ENCODE measurements at regions of chr6 and their contacts with region 1.

Region 1: GRCh38 chr6:80004173-80005072 is at the start of gene TTK:
- DNase-seq: peak; percentile 94
- ATAC-seq: peak; percentile 100
- H3K4me3 ChIP-seq: peak within 1 kb of the TSS; percentile 26 to 93 (median 84)
- H3K4me3 Mint-ChIP-seq: peak within 1 kb of the TSS; percentile 92
- H3K27ac ChIP-seq: peak within 1 kb of the TSS; percentile 39 to 57
- H3K27ac Mint-ChIP-seq: peak within 1 kb of the TSS; percentile 70
- H3K4me1 ChIP-seq: peaks cover 12 to 13% of the 10 kb centered on the region in 2 donors
- H3K4me1 Mint-ChIP-seq: peaks cover 21% of the 10 kb centered on the region
- H3K27me3 ChIP-seq: no peaks in the 10 kb centered on the region
- H3K27me3 Mint-ChIP-seq: no peaks in the 10 kb centered on the region
- CTCF ChIP-seq: no peak
- total RNA-seq, gene TTK: 0.68 and 0.84 TPM in 2 replicates

Region 2: DNA sequence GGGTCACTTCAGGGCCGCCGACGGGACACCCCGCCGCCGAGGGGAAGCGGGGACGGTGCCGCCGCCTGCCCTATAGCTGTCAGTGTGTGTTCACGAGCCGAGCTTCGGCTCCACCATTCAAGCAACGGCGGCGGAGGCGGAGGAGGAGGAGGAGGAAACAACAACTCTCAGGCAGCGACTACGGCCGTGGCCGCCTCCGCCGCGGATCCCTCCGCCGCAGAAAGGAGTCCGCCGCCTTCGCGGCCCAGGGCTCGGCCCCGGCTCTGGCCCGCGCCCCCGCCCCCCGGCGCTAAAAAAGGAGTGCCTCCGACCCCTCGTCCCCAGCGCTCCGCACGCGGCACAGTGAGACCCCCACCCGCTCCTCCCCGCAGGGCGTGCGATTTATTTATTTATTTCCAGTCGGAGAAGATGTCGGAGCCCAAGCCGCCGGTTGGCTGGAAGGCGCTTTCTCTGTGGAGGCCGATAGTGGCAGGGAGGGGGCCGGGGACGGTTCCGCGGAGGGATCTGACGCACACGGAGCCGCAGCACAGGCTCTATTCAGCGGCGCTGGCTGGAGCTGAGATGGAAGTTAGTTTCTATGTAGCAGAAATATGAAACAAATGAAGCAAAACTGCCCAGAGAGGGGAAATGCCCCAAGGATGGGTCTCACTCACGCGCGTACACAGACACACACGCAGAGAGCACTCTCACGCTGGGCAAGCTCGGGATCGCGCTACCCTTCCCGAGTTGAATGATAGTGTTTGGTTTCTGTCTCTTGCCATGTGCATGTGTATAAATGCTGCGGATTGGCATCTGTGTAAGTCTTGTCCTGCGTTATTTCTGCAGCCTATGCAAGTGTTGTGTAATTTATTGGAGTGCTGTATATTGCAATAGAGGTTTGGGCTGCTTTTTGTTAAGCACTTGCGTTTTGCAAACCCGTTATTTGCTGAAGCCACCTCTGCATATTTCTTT is 926.1 kb before region 1 on chr6 and contains the start of gene PHIP:
- CTCF ChIA-PET with region 1: no interaction called
- POLR2A ChIA-PET with region 1: no interaction called
- intact Hi-C with region 1: loop called (anchors 2 kb)
- DNase-seq: peak; percentile 98
- ATAC-seq: peak; percentile 76
- H3K4me3 ChIP-seq: peak within 1 kb of the TSS; percentile 82 to 99 (median 86)
- H3K4me3 Mint-ChIP-seq: peak within 1 kb of the TSS; percentile 96
- H3K27ac ChIP-seq: peak within 1 kb of the TSS; percentile 95
- H3K27ac Mint-ChIP-seq: peak within 1 kb of the TSS; percentile 98
- H3K4me1 ChIP-seq: peaks cover 3 to 28% of the 10 kb centered on the region in 2 donors
- H3K4me1 Mint-ChIP-seq: peaks cover 38% of the 10 kb centered on the region
- H3K27me3 ChIP-seq: peaks cover 0 to 7% (median 0%) of the 10 kb centered on the region in 4 experiments
- H3K27me3 Mint-ChIP-seq: no peaks in the 10 kb centered on the region
- CTCF ChIP-seq: no peak
- total RNA-seq, gene PHIP: 52.7 and 53.3 TPM in 2 replicates

Region 3: DNA sequence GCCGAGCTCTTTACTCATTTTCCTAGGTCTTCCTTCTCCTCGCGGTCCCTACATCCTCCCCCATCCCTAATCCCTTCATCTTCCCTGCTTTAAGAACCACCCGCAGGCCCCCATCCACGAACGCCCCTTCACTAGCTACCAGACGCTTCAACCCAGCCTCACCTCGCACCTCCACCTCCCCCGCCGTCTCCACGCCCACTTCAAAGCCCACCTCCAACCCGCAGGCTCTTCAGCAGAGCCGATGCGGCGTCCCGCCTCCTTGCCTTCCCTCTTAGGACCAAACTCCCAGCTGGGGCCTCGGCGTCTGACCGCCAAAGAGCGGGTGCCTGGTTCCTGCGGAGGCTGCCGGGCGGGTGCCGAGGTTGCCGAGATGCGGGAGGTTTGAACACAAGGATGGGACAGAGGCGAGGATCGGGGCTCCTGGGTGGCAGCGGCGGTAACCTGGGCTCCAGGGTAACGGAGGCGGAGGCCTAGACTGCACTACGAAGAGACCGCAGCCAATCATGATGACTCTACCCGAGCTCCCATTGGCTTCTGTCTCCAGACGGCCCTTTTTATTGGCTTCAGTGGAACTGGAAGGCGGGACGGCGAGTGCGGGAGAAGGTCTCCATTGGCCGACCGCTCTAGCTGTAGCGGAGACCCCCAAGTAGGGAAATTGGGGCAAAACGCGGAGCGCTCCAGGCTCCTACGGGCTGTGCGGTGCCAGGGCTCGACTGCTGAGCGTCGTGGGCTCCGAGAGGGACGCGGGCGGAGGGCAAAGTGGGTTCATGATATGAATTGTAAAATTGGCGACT is 467.3 kb before region 1 on chr6 and contains the start of gene LCA5:
- CTCF ChIA-PET with region 1: no interaction called
- POLR2A ChIA-PET with region 1: no interaction called
- intact Hi-C with region 1: loop called (anchors 2 kb)
- DNase-seq: peak; percentile 92
- ATAC-seq: peak; percentile 97
- H3K4me3 ChIP-seq: peak within 1 kb of the TSS; percentile 63 to 92 (median 81)
- H3K4me3 Mint-ChIP-seq: no peak within 1 kb of the TSS
- H3K27ac ChIP-seq: peak within 1 kb of the TSS; percentile 31 to 59
- H3K27ac Mint-ChIP-seq: no peak within 1 kb of the TSS
- H3K4me1 ChIP-seq: peaks cover 12 to 15% of the 10 kb centered on the region in 2 donors
- H3K4me1 Mint-ChIP-seq: no peaks in the 10 kb centered on the region
- H3K27me3 ChIP-seq: peaks cover 0 to 5% (median 0%) of the 10 kb centered on the region in 4 experiments
- H3K27me3 Mint-ChIP-seq: peaks cover 9% of the 10 kb centered on the region
- CTCF ChIP-seq: no peak
- total RNA-seq, gene LCA5: 0.91 and 0.92 TPM in 2 replicates

Region 4: GRCh38 chr6:79949233-79949632 is 55.2 kb before region 1 on chr6:
- CTCF ChIA-PET with region 1: no interaction called
- POLR2A ChIA-PET with region 1: no interaction called
- intact Hi-C with region 1: loop called (anchors 5 kb)
- DNase-seq: peak; percentile 63
- ATAC-seq: no peak
- H3K4me3 ChIP-seq: no peak overlapping the region
- H3K4me3 Mint-ChIP-seq: no peak overlapping the region
- H3K27ac ChIP-seq: no peak overlapping the region
- H3K27ac Mint-ChIP-seq: no peak overlapping the region
- H3K4me1 ChIP-seq: peaks cover 18 to 21% of the 10 kb centered on the region in 2 donors
- H3K4me1 Mint-ChIP-seq: peaks cover 19% of the 10 kb centered on the region
- H3K27me3 ChIP-seq: peaks cover 0 to 42% (median 36%) of the 10 kb centered on the region in 4 experiments
- H3K27me3 Mint-ChIP-seq: peaks cover 50% of the 10 kb centered on the region
- CTCF ChIP-seq: peak; percentile 61

Measured in B cell (primary cell).